Activated B cell treated with CpG ODN at 0.5 μM for 24 hours (primary cell): ENCODE measurements at regions of chr4 and their contacts with region 1.

Region 1: DNA sequence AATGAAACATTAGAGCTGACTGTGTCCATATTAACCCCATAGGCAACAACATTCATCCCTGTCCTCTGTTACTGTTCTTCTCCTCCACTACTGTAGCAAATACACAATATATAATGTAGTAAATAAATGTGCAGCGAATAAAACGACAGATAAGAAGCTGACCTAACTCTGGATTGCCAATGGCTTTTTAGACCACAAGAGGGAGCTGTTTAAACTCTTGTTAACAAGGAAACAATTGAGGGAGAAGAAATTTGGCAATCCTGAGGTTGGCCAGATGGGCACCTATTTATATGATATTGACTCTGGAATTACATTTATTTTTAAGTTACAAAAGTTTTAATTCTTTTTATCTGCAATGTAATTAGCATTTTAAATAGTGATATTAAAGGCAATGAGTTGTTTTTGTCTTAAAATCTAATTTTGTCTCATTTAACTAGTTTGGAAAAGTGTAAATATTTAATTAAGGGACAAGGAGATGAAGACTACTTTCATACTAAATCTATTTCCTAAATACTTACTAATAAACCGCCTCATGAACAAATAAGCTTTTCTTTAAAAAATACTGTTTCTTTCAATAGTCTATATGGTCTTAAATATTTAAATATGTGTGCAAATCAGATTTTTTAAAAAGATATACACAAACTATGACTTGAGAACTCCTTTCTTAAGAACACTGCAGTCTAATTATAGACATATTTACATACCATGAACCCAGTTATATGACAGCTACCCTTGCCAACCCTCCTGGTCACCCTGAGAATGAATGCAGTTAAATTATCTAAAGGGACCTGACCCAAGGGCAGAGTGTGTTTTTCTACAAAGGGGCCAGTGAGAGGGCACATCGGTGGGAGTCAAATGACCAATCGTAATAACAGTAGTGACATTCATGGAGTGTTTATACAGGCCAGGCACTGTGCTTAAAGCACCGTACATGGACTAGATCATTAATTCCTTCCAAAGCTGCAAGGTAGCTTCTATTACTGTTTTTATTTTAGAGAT is 52.9 kb upstream of the HPF1 start:
- DNase-seq: no peak
- ATAC-seq: no peak
- H3K4me3 Mint-ChIP-seq: no peak overlapping the region
- H3K27ac Mint-ChIP-seq: no peak overlapping the region
- H3K4me1 Mint-ChIP-seq: no peaks in the 10 kb centered on the region
- H3K27me3 Mint-ChIP-seq: peaks cover 4% of the 10 kb centered on the region
- CTCF ChIP-seq: no peak

Region 2: GRCh38 chr4:169912646-169913395 is 102.2 kb after region 1 on chr4:
- CTCF ChIA-PET with region 1: no interaction called
- POLR2A ChIA-PET with region 1: no interaction called
- intact Hi-C with region 1: no loop called
- DNase-seq: no peak
- ATAC-seq: no peak
- H3K4me3 Mint-ChIP-seq: no peak overlapping the region
- H3K27ac Mint-ChIP-seq: no peak overlapping the region
- H3K4me1 Mint-ChIP-seq: no peaks in the 10 kb centered on the region
- H3K27me3 Mint-ChIP-seq: peaks cover under 1% of the 10 kb centered on the region
- CTCF ChIP-seq: no peak

Region 3: GRCh38 chr4:170047771-170048354 is 237.2 kb after region 1 on chr4:
- CTCF ChIA-PET with region 1: interaction called, 47 read pairs
- POLR2A ChIA-PET with region 1: no interaction called
- intact Hi-C with region 1: loop called (anchors 1 kb)
- DNase-seq: no peak
- ATAC-seq: no peak
- H3K4me3 Mint-ChIP-seq: no peak overlapping the region
- H3K27ac Mint-ChIP-seq: no peak overlapping the region
- H3K4me1 Mint-ChIP-seq: no peaks in the 10 kb centered on the region
- H3K27me3 Mint-ChIP-seq: peaks cover 3% of the 10 kb centered on the region
- CTCF ChIP-seq: peak; percentile 51